ENCODE measurements at regions of chr3 and their contacts with region 1.

Region 1: DNA sequence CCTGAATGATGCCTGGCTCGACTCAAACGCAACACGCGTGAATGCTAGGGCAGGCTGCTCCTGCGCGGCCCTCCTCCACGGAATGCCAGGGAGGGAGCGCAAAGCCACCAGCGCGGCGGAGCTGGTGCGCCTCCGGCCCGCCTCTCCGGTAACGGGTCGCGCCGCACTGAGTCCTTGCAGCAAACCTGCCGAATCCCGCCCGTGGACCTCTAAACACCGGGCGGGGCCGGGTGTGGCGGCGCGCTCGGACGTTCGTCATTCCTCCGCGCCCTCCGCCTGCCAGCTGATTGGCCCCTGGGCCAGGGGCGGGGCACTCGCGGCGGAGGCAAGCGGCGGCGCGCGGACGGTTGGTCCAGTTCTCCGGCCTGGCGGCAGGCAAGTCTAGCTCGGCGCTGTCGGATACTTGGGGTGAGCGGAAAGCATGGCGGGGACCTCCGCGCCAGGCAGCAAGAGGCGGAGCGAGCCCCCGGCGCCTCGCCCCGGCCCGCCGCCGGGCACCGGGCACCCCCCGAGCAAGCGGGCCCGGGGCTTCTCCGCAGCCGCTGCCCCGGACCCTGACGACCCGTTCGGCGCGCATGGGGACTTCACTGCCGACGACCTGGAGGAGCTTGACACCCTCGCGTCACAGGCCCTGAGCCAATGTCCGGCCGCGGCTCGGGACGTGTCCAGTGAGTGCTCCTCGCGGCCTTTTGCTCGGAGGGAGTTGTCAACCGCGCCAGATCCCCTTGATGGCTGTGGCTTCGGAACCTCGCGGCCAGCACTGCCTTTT is at the start of gene ATRIP:
- DNase-seq: peak; percentile 71 to 93 (median 82)
- ATAC-seq: peak; percentile 98
- H3K4me3 ChIP-seq: peak within 1 kb of the TSS; percentile 88
- H3K4me3 Mint-ChIP-seq: peak within 1 kb of the TSS; percentile 93
- H3K27ac ChIP-seq: peak within 1 kb of the TSS; percentile 57 to 77
- H3K27ac Mint-ChIP-seq: peak within 1 kb of the TSS; percentile 86
- H3K4me1 ChIP-seq: peaks cover 31% of the 10 kb centered on the region
- H3K4me1 Mint-ChIP-seq: peaks cover 53% of the 10 kb centered on the region
- H3K27me3 ChIP-seq: no peaks in the 10 kb centered on the region
- H3K27me3 Mint-ChIP-seq: no peaks in the 10 kb centered on the region
- CTCF ChIP-seq: no peak
- total RNA-seq, gene ATRIP: 8.8 to 10.3 TPM

Region 2: DNA sequence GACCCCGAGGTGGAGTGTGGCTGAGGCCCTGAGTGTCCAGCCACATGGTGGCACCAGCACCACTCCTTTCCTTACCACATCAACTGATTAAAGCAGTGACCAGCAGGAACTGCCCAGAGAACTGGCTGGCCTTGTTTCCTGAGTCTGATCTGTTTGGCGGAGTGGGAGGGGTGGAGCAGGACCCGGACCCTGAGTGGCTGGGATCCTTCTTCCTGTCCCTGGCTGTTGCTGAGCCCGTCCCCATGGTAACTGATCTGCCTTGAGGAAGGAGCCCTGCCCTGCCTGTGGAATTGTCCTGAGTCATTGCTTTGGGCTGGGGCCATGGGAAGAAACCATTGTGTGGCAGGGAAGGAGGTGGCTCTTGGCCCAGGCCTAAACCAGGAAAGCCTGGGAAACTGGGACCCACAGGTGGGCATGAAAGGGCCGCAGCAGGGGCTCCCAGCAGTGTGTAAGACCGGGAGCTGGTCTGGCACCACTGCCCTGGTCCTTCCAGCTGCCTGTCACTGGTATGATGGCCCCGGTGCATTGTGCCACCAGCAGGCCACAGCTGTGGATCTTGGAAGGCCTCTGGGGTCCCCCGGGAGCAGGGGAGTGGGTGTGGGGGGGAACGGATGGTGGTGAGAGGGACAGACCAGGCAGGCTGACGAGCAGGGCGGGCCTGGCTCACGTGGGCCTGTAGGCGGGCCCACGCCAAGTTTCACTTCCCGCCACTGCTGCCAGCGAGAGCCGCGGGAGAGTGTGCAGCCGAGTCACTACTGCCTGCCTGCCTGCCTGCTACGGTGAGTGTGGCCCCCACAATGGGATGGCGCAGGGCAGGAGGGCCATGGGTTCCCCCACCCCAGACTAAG is 19.1 kb after region 1 on chr3:
- CTCF ChIA-PET with region 1: no interaction called
- POLR2A ChIA-PET with region 1: interaction called, 6 read pairs
- intact Hi-C with region 1: loop called in 1 of 2 experiments (anchors 2 kb)
- DNase-seq: peak; percentile 62 to 89 (median 76)
- ATAC-seq: peak; percentile 96
- H3K4me3 ChIP-seq: peak overlapping the region; percentile 72
- H3K4me3 Mint-ChIP-seq: peak overlapping the region; percentile 87
- H3K27ac ChIP-seq: peak overlapping the region; percentile 94
- H3K27ac Mint-ChIP-seq: peak overlapping the region; percentile 94
- H3K4me1 ChIP-seq: peaks cover 66% of the 10 kb centered on the region
- H3K4me1 Mint-ChIP-seq: peaks cover 53% of the 10 kb centered on the region
- H3K27me3 ChIP-seq: no peaks in the 10 kb centered on the region
- H3K27me3 Mint-ChIP-seq: no peaks in the 10 kb centered on the region
- CTCF ChIP-seq: no peak

Region 3: GRCh38 chr3:48472915-48473616 is 26.5 kb after region 1 on chr3:
- CTCF ChIA-PET with region 1: interaction called, 8 read pairs
- POLR2A ChIA-PET with region 1: interaction called, 55 read pairs
- intact Hi-C with region 1: loop called in 1 of 2 experiments (anchors 2 kb)
- DNase-seq: peak; percentile 86 to 99 (median 94)
- ATAC-seq: peak; percentile 87
- H3K4me3 ChIP-seq: peak overlapping the region; percentile 63
- H3K4me3 Mint-ChIP-seq: peak overlapping the region; percentile 89
- H3K27ac ChIP-seq: peak overlapping the region; percentile 92 to 97
- H3K27ac Mint-ChIP-seq: peak overlapping the region; percentile 94
- H3K4me1 ChIP-seq: peaks cover 94% of the 10 kb centered on the region
- H3K4me1 Mint-ChIP-seq: peaks cover 48% of the 10 kb centered on the region
- H3K27me3 ChIP-seq: no peaks in the 10 kb centered on the region
- H3K27me3 Mint-ChIP-seq: no peaks in the 10 kb centered on the region
- CTCF ChIP-seq: peak; percentile 28

Region 4: GRCh38 chr3:48478596-48479555 is 32.3 kb after region 1 on chr3:
- CTCF ChIA-PET with region 1: no interaction called
- POLR2A ChIA-PET with region 1: interaction called, 55 read pairs
- intact Hi-C with region 1: no loop called
- DNase-seq: peak; percentile 38 to 87 (median 59)
- ATAC-seq: peak; percentile 85
- H3K4me3 ChIP-seq: peak overlapping the region; percentile 47
- H3K4me3 Mint-ChIP-seq: peak overlapping the region; percentile 89
- H3K27ac ChIP-seq: peak overlapping the region; percentile 67 to 75
- H3K27ac Mint-ChIP-seq: peak overlapping the region; percentile 95
- H3K4me1 ChIP-seq: peaks cover 61% of the 10 kb centered on the region
- H3K4me1 Mint-ChIP-seq: peaks cover 36% of the 10 kb centered on the region
- H3K27me3 ChIP-seq: no peaks in the 10 kb centered on the region
- H3K27me3 Mint-ChIP-seq: no peaks in the 10 kb centered on the region
- CTCF ChIP-seq: no peak

Region 5: GRCh38 chr3:48804930-48805329 is 358.3 kb after region 1 on chr3:
- CTCF ChIA-PET with region 1: no interaction called
- POLR2A ChIA-PET with region 1: no interaction called
- intact Hi-C with region 1: no loop called
- DNase-seq: no peak
- ATAC-seq: no peak
- H3K4me3 ChIP-seq: no peak overlapping the region
- H3K4me3 Mint-ChIP-seq: no peak overlapping the region
- H3K27ac ChIP-seq: no peak overlapping the region
- H3K27ac Mint-ChIP-seq: no peak overlapping the region
- H3K4me1 ChIP-seq: no peaks in the 10 kb centered on the region
- H3K4me1 Mint-ChIP-seq: peaks cover 5% of the 10 kb centered on the region
- H3K27me3 ChIP-seq: no peaks in the 10 kb centered on the region
- H3K27me3 Mint-ChIP-seq: no peaks in the 10 kb centered on the region
- CTCF ChIP-seq: no peak

Measured in CD4-positive, alpha-beta T cell (primary cell).